Colonic mucosa (tissue), 4 donors: ENCODE measurements at regions of chr6 and their contacts with region 1.

Region 1: GRCh38 chr6:158286413-158286812 is 25.9 kb upstream of the TULP4 start:
- DNase-seq: no peak
- H3K4me3 ChIP-seq: no peak overlapping the region
- H3K27ac ChIP-seq: no peak overlapping the region
- H3K4me1 ChIP-seq: peaks cover 3% of the 10 kb centered on the region
- H3K27me3 ChIP-seq: no peaks in the 10 kb centered on the region
- CTCF ChIP-seq: no peak

Region 2: DNA sequence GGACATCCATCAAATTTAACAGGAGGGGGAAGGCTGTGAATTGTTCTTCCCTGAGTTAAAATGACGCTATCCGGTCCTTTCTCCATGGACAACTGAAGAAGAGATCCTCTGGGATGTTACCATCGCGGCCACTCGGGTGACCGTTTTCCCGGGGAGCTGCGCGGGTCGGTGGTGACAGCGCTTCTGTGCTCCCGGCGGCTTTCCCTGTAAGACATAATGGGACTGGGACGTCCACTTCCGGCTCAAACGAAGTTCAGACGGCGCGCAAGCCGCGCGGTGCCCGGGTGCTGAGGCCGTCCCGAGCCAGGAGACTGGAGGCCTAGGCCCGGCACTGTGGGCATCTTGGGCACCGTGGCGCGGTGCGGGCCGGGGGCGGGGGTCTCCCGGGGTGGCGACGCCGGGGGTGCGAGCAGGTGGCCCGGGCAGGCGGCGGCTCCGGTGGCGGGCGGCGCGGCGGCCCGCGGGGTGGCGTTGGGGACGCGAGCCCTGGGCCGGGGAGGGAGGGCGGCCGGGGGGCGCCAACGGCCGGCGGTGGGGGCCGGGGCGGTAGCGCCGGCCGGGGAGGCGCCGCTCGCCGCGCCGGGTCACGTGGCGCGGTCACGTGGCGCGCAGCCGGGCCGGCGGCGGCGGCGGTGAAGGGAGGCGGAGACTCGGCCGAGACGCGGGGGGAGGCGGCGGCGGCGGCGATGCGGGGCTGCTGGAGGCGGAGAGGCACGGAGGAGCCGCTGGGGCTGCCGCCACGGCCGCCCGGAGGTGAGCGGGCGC is 54.7 kb before region 1 on chr6:
- intact Hi-C with region 1: loop called (anchors 5 kb)
- DNase-seq: peak; percentile 76
- H3K4me3 ChIP-seq: peak overlapping the region; percentile 77
- H3K27ac ChIP-seq: peak overlapping the region; percentile 68
- H3K4me1 ChIP-seq: peaks cover 6% of the 10 kb centered on the region
- H3K27me3 ChIP-seq: no peaks in the 10 kb centered on the region
- CTCF ChIP-seq: no peak